Activated T-helper 2 cell treated with anti-CD3 and anti-CD28 coated beads, Interferon-gamma antibody, Interleukin-2, Interleukin-4, amounts not matched to agents 10 μg/mL and 5 μg/mL and 100 μg/mL, durations not matched to agents 14 hours and 24 hours and 36 hours (primary cell): ENCODE measurements at regions of chr7 and their contacts with region 1.

Region 1: DNA sequence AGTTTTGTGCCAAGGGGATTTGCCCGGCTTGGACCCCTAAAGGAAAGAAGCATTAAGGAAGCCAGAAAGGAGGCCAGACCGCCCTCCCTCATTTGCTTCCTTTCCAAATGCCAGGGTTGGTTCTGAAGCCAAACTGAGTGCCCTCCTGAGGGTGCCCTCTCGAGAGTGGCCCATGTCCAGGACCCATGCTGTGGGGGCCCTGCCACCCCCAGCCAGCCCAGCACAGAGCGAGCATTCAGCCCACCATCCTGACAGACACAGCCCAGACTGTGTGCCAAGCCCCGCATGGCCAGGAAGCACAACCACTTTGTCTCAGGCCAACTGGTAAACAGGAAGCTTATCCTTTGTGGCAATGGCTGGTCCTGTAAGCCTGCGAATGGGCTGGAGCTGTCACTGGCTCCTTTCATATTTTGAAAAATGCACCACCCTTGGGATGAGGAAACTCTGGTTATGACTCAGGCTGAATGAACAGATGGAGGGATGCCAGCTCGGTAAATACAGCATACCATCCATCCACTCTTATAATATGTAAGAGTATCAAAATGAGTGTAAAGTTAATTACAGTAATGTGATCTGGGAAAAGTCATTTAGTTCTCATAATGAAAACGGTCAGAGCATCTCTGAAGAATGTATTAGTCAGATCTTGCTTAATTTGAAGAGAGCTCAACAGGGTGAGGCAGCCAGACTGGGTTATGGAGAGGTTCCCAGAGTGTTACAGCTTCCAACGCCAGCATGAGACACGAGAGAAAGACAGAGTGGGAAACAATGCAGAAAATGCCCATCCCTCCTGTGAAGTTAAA is 65.0 kb downstream of the STK17A start:
- DNase-seq: no peak
- H3K4me3 Mint-ChIP-seq: peak overlapping the region; percentile 66
- H3K27ac Mint-ChIP-seq: peak overlapping the region; percentile 98
- H3K4me1 Mint-ChIP-seq: peaks cover 85% of the 10 kb centered on the region
- H3K27me3 Mint-ChIP-seq: no peaks in the 10 kb centered on the region

Region 2: GRCh38 chr7:41881331-41882130 is 1766.3 kb before region 1 on chr7:
- intact Hi-C with region 1: loop called (anchors 5 kb)
- DNase-seq: peak; percentile 76
- H3K4me3 Mint-ChIP-seq: peak overlapping the region; percentile 66
- H3K27ac Mint-ChIP-seq: peak overlapping the region; percentile 94
- H3K4me1 Mint-ChIP-seq: peaks cover 59% of the 10 kb centered on the region
- H3K27me3 Mint-ChIP-seq: no peaks in the 10 kb centered on the region

Region 3: GRCh38 chr7:43054052-43054722 is 593.7 kb before region 1 on chr7:
- intact Hi-C with region 1: no loop called
- DNase-seq: no peak
- H3K4me3 Mint-ChIP-seq: no peak overlapping the region
- H3K27ac Mint-ChIP-seq: no peak overlapping the region
- H3K4me1 Mint-ChIP-seq: no peaks in the 10 kb centered on the region
- H3K27me3 Mint-ChIP-seq: peaks cover 9% of the 10 kb centered on the region

Region 4: DNA sequence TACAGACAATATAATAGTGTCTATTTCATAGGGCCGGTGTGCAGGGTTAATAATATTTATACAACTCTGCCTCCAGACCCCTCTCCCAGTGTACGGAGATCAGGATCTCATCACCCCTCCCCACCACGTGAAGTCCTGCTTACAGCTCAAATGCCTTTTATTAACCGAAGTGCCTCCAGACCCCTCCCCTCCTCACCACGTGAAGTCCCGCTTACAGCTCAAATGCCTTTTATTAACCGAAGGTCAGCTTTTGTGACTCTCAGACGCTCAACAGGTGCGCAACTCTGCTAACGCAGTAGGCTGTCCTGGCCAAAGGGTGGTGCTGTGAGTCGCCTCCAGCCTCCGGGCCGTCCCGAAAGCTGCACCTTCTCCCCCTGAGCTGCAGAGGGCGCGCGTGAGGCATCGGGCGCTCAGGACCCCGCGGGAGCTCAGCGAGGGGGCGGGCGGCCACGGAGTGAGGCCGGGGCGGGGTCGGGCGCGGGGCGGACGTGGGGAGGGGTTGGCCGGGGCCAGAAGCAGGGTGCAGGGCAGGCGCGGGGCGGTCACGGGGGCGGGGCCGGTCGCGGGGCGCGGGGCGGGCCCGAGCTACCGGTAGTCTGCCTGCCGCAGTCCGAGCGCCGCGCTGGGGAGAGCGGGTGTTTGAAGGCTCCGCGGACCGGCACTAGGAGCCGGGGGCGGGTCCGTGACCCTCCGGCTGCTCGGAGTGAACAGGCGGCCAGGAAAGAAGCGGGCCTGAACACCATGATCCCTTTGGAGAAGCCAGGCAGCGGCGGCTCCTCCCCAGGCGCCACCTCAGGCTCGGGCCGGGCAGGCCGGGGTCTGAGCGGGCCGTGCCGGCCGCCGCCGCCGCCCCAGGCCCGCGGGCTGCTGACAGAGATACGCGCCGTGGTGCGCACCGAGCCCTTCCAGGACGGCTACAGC is 65.1 kb before region 1 on chr7 and contains the start of gene STK17A:
- intact Hi-C with region 1: loop called (anchors 1 kb)
- DNase-seq: peak; percentile 94
- H3K4me3 Mint-ChIP-seq: peak within 1 kb of the TSS; percentile 91
- H3K27ac Mint-ChIP-seq: peak within 1 kb of the TSS; percentile 91
- H3K4me1 Mint-ChIP-seq: peaks cover 34% of the 10 kb centered on the region
- H3K27me3 Mint-ChIP-seq: peaks cover 19% of the 10 kb centered on the region
- total RNA-seq, gene STK17A: 20.4 and 21.7 TPM in 2 replicates

Region 5: DNA sequence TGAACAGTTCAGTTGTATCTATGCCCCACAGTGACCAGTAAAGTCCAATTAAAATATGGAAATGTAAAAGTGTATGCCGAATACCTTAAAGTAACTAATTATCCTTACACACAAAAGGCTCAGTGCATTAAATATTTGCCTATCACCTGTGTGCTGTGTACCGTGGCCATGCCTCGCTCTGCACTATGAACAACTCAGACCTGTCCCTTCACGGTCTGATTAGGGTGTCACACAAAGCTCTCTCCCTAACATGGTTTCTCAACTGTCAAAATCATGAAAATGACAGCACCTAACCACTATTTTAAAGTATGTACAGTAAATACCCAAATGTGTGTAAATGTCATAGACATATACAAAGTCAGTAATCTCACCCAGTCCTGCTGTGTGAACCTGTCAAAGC is 21.9 kb before region 1 on chr7:
- intact Hi-C with region 1: loop called (anchors 1 kb)
- DNase-seq: no peak
- H3K4me3 Mint-ChIP-seq: no peak overlapping the region
- H3K27ac Mint-ChIP-seq: peak overlapping the region; percentile 37
- H3K4me1 Mint-ChIP-seq: peaks cover 61% of the 10 kb centered on the region
- H3K27me3 Mint-ChIP-seq: no peaks in the 10 kb centered on the region

Region 6: GRCh38 chr7:43669286-43670081 is 21.6 kb after region 1 on chr7:
- intact Hi-C with region 1: loop called (anchors 1 kb)
- DNase-seq: peak; percentile 26
- H3K4me3 Mint-ChIP-seq: peak overlapping the region; percentile 73
- H3K27ac Mint-ChIP-seq: peak overlapping the region; percentile 94
- H3K4me1 Mint-ChIP-seq: peaks cover 48% of the 10 kb centered on the region
- H3K27me3 Mint-ChIP-seq: no peaks in the 10 kb centered on the region

Region 7: DNA sequence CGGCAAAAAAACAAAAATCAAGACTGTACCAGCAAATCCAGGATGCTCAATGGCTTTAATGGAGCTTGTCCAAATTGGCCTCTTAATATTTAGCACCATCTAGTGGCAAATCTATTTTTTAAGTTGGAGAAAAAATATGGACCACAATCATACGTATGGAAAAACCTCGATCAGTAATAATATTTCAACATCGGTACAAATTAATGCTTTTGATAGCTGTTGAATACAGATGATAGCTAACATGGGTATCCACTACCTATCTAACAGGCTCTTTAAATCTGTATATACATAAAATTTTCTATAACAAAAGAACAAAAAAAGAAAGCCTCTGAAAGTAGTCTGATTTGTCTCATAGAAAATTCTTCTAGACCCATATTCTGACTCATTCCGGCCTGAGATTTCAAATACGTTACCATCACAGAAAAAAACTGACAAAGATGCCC is 52.2 kb after region 1 on chr7:
- intact Hi-C with region 1: loop called (anchors 1 kb)
- DNase-seq: no peak
- H3K4me3 Mint-ChIP-seq: no peak overlapping the region
- H3K27ac Mint-ChIP-seq: no peak overlapping the region
- H3K4me1 Mint-ChIP-seq: peaks cover 46% of the 10 kb centered on the region
- H3K27me3 Mint-ChIP-seq: no peaks in the 10 kb centered on the region

Region 8: GRCh38 chr7:43779032-43779812 is 131.3 kb after region 1 on chr7:
- intact Hi-C with region 1: no loop called
- DNase-seq: no peak
- H3K4me3 Mint-ChIP-seq: no peak overlapping the region
- H3K27ac Mint-ChIP-seq: no peak overlapping the region
- H3K4me1 Mint-ChIP-seq: peaks cover 8% of the 10 kb centered on the region
- H3K27me3 Mint-ChIP-seq: no peaks in the 10 kb centered on the region

Region 9: DNA sequence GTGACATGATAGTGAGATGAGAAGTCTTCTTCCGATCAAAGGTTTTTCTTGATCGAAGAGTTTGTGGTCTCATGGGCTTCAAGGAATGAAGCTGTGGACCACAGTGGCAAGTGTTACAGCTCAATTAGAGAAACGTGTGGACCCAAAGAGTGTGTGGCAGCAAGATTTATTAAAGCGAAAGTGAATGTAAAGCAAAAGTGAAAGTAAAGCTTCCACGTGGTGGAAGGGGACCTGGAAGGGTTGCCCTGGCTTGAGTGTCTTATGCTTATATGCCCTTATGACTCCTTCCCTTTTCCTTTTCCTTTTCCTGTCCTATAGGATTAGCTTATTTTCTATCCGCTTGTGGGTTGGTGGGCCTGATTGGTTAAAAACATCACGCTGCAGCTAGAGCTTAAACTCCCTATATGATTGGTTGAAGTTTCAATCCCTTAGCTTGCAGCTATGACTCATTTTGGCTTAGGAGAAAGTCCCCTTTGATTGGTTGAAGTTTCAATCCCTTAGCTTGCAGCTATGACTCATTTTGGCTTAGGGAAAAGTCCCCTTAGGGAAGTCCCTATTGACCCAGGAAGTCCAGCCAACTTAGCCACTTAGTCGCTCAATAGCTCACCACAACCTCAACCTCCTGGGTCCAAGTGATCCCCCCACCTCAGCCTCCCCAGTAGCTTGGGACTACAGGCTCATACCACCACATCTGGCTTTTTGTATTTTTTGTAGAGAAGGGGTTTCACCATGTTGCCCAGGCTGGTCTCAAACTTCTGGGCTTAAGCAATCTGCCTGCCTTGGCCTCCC is 186.8 kb after region 1 on chr7:
- intact Hi-C with region 1: loop called (anchors 2 kb)
- DNase-seq: peak; percentile 24
- H3K4me3 Mint-ChIP-seq: peak overlapping the region; percentile 75
- H3K27ac Mint-ChIP-seq: peak overlapping the region; percentile 83
- H3K4me1 Mint-ChIP-seq: peaks cover 15% of the 10 kb centered on the region
- H3K27me3 Mint-ChIP-seq: no peaks in the 10 kb centered on the region